ENCODE measurements at regions of chr16 and their contacts with region 1.

Region 1: DNA sequence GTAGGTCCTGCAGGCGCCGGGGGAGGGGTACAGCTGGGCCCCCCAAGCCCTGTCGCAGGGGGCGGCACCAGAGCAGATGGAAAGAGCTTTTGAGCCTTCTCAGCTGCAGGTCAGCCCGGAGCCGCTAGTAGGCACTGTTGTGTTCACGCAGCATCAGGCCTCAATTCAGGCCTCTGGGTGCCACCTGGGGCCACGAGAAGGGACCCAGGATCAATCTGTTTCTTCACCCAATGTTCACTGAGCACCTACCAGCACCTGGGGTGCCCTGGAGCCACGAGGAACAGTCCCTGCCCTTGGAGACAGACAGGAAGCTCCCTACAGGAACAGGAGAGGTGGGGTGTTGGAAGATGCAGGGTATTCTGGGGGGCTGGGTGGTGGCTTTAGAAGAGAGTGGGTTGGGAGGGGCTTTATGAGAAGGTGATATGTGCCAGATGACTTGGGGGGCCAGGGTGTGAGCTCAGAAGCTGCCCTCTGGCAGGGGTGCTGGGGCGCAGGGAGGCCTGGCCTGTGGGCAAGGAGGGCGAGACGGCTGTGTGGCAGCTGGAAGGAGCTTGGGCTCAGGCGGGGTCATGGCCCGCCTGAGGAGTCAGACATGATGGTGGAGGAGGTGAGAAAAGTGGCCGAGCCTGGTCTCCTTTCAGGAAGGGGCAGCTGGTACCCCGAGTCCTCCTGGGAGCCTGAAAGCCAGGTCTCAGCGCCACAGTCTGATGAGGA is 121.9 kb upstream of the GSE1 start:
- H3K4me3 ChIP-seq: no peak overlapping the region
- H3K27ac ChIP-seq: no peak overlapping the region
- H3K4me1 ChIP-seq: no peaks in the 10 kb centered on the region
- CTCF ChIP-seq: no peak

Region 2: GRCh38 chr16:85187002-85187401 is 304.2 kb before region 1 on chr16:
- CTCF ChIA-PET with region 1: no interaction called
- POLR2A ChIA-PET with region 1: no interaction called
- H3K4me3 ChIP-seq: no peak overlapping the region
- H3K27ac ChIP-seq: no peak overlapping the region
- H3K4me1 ChIP-seq: no peaks in the 10 kb centered on the region
- CTCF ChIP-seq: no peak

Region 3: GRCh38 chr16:85471444-85472431 is 19.5 kb before region 1 on chr16:
- CTCF ChIA-PET with region 1: interaction called, 12 read pairs
- POLR2A ChIA-PET with region 1: no interaction called
- H3K4me3 ChIP-seq: no peak overlapping the region
- H3K27ac ChIP-seq: no peak overlapping the region
- H3K4me1 ChIP-seq: peaks cover 11% of the 10 kb centered on the region
- CTCF ChIP-seq: no peak

Measured in HEK293 (cell line).